ENCODE measurements at regions of chr21 and their contacts with region 1.

Region 1: GRCh38 chr21:29298348-29299045 is at the start of gene BACH1:
- DNase-seq: peak; percentile 97
- total RNA-seq, gene BACH1: 50.1 to 84.0 TPM

Region 2: GRCh38 chr21:29091032-29091431 is 207.5 kb before region 1 on chr21:
- intact Hi-C with region 1: loop called in 1 of 2 experiments (anchors 2 kb)
- DNase-seq: no peak

Region 3: DNA sequence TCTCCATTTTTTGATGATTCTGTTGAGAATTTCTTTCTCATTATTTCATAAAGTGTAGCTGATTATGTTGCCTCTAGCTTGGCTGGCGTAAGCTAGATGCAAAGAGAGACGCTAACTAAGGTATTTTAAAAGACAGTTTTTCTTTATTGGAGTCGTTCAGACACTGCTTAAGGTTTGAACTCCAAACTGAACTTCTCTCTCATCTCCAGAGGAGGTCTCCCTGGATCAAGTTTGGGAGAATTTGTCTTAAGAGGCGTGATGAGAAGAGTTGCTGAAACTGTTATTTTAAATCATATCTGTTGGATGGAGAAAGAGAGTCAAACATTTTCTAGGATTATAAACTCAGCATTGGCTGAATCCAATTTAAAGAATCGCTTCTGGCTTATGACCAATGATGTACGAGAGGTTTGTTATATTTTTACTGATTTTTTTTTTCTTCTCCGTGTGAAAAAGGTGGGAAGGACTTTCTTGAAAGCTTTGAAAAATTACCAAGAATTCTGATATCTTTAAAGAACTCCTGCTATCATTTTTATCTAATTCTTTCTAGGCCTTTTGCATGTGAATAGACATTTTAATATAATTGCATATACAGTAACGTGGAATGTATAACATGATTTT is 134.1 kb before region 1 on chr21:
- intact Hi-C with region 1: loop called in 1 of 2 experiments (anchors 10 kb)
- DNase-seq: no peak

Region 4: DNA sequence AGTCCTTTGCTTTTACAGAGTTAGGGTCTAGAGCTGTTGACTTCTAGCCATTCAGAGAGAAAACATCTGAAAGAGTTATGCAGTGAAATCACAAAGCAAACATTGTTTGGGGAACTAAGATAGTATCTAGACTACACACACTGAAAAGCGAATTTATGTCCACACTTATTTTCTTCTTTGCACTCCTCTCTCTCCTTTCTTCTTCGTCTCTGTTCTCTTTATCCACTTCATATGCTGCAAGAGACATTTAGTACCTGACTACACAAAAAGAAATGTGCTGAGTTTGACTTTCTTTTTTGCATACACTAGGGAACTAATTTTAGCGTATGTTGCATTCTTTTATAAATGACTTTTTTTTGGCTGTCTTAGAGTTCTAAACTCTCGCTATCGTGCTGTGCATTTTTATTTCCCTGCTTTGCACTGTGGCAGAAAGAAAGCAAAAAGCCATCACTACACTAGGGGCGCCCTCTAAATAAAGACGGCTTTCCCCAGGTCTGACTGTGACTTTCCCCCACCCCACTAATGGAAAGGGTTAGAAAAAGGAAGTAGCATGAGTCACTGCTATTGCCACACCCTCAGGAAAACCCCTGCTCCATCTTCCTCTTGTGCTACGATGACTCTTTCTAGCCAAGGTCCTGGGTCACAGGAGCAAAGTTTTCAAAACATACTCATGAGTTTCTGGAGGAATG is 102.4 kb before region 1 on chr21:
- intact Hi-C with region 1: no loop called
- DNase-seq: no peak